ENCODE measurements at regions of chr6 and their contacts with region 1.

Region 1: GRCh38 chr6:118283766-118284165 is 264.3 kb upstream of the PLN start:
- DNase-seq: peak; percentile 68
- ATAC-seq: peak; percentile 79

Region 2: DNA sequence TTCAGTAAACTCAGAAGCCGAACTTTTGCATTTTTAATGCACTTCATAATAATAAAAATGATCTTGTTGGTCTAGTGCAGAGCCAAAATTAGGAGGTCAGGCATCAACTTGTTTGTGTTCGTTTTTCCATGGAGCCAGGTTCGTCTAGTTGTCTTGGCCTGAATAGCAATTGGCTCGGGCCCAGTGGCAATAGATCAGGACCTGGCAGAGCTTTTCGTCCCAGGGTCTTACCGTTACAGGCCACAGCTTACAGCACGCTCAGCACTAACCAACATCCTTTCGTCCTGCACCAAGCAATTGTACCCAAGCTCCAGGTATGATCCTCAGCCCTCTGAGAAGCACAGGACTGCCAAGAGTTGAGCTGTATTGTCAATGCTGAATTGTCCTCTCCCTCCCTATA is 23.8 kb after region 1 on chr6:
- intact Hi-C with region 1: no loop called
- DNase-seq: no peak
- ATAC-seq: no peak

Region 3: GRCh38 chr6:118618679-118619377 is 335.1 kb after region 1 on chr6:
- intact Hi-C with region 1: loop called (anchors 10 kb)
- DNase-seq: peak; percentile 70
- ATAC-seq: peak; percentile 85

Region 4: DNA sequence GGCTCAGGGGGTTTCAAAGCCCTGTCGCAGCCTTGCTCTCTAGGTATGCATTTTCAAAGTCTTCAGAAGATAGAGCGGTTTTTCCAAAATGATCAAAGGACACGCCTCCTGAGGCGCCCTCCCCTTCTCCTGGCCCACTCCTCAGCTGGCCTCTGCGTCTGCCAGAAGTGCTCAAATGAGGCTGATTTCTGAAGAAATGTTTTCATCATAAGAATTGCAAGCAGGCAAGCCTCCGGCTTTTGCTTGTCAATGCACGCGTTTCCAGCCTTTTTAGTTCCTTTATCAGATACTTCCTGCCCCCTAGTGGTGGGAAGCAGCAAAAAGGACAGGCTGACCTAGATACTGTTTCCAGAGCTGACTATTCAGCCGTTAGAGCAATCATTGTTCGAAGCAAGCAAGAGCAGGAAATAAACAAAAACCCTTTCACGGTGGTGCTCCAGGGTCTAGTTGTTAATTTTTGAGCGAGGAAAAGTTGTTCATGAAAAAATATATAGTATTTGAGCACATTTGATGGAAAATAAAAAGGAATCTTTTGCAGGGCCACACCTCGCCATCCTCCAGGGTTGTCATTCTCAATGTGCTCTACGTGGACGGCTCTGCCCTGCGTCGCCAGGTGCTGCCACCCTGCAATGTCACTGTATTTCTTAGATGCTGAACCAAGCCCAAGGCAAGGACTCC is 516.8 kb after region 1 on chr6:
- intact Hi-C with region 1: loop called (anchors 10 kb)
- DNase-seq: peak; percentile 89
- ATAC-seq: peak; percentile 94

Measured in sciatic nerve (tissue), 2 donors.